AG04449 (cell line): ENCODE measurements at regions of chr22 and their contacts with region 1.

Region 1: DNA sequence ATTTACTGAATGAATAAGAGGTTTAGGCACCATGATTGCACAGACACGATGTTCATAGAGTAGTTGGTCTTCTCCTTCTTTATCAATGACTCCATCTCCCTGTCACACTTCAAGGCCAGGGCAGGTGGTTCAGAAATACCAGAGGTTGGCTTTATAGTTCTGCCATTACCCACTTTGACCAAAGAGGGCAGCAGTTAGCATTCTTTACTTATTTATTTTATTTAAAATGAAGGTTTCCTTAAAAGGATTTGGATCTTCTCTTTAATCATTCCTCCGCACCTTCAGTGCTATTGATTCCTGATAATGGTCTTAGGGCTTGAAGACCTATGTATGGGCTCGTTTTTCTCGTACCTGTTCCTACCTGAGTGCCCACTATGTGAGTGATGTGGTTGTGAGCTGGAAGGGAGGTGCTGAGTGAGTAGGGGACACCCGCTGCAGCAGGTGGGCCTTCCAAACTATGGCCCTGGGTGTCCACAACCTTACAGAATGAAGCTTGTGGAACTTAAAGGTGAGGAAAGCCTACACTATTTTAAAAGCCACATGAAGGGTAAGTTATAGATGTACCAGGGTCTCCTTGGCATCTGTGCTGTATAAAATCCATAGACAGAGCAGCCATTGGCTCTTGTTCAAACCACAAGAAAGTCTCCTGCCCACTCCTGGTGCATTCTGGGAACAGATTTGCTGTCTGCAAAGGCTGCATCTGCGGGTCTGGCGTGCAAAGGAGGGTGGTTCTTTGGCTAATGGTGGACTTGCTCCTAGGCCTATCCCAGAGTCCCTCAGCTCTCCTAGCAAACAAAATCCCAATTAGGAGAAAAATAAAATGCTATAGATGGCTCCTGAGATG is 35.0 kb downstream of the TIMP3 start:
- DNase-seq: no peak
- H3K4me3 ChIP-seq: no peak overlapping the region
- CTCF ChIP-seq: peak; percentile 18

Region 2: GRCh38 chr22:32810561-32811004 is 25.9 kb before region 1 on chr22:
- CTCF ChIA-PET with region 1: interaction called, 14 read pairs
- POLR2A ChIA-PET with region 1: no interaction called
- DNase-seq: no peak
- H3K4me3 ChIP-seq: no peak overlapping the region
- CTCF ChIP-seq: no peak

Region 3: GRCh38 chr22:32846901-32847491 is 10.5 kb after region 1 on chr22:
- CTCF ChIA-PET with region 1: interaction called, 19 read pairs
- POLR2A ChIA-PET with region 1: no interaction called
- DNase-seq: no peak
- H3K4me3 ChIP-seq: no peak overlapping the region
- CTCF ChIP-seq: no peak